Naive thymus-derived CD4-positive, alpha-beta T cell (primary cell): ENCODE measurements at regions of chr6 and their contacts with region 1.

Region 1: GRCh38 chr6:11093589-11094410 is at the start of gene SMIM13:
- DNase-seq: peak; percentile 85 to 94 (median 93)
- ATAC-seq: peak; percentile 96
- H3K4me3 ChIP-seq: peak within 1 kb of the TSS; percentile 97
- H3K4me3 Mint-ChIP-seq: peak within 1 kb of the TSS; percentile 83 to 98 (median 97)
- H3K27ac ChIP-seq: peak within 1 kb of the TSS; percentile 88
- H3K27ac Mint-ChIP-seq: peak within 1 kb of the TSS; percentile 89 to 98 (median 97)
- H3K4me1 ChIP-seq: peaks cover 11 to 14% of the 10 kb centered on the region in 2 donors
- H3K4me1 Mint-ChIP-seq: peaks cover 21 to 43% (median 27%) of the 10 kb centered on the region in 7 donors
- H3K27me3 ChIP-seq: no peaks in the 10 kb centered on the region
- H3K27me3 Mint-ChIP-seq: no peaks in the 10 kb centered on the region
- total RNA-seq, gene SMIM13: 4.0 to 9.9 (median 4.4) TPM

Region 2: DNA sequence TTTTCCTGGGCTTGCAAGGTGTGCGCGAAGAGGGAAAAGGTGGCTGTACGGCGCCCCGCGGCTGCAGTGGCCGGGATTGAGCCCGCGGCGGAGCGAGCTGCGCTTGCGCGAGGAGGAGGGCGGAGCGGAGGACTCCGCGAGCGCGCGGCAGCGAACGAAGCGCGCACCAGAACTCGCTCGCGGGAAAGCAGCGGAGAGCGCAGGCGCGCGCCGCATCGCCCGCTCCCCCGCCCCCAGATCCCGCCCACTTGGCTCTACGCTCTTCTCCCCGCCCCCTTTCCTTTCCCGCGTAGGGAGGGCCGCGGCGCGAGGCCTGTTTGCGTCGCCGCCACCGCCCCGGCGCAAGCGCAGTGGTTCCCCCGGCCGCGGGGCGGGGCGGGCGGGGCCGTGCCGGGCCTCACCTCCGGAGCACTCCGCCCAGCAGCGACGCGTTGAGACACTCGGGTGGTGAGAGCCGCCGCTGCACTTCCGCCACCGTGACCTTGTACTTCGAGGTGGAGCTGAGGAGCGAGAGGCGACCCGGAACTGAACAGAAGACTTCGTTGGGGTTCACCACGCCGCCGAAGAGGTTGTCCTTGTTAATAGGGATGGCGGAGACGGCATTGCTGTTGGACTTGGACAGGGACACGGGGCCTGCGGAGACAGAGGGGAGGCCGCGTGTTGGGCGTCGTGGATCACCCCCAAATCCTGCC is 689.5 kb before region 1 on chr6:
- CTCF ChIA-PET with region 1: no interaction called
- POLR2A ChIA-PET with region 1: no interaction called
- intact Hi-C with region 1: loop called in 1 of 2 experiments (anchors 2 kb)
- DNase-seq: peak; percentile 77 to 90 (median 83)
- ATAC-seq: peak; percentile 93
- H3K4me3 ChIP-seq: peak overlapping the region; percentile 77
- H3K4me3 Mint-ChIP-seq: peak overlapping the region; percentile 79 to 91 (median 84)
- H3K27ac ChIP-seq: peak overlapping the region; percentile 9
- H3K27ac Mint-ChIP-seq: peak overlapping the region in 8 of 9 donors; percentile 41 to 90 (median 72)
- H3K4me1 ChIP-seq: peaks cover 10 to 12% of the 10 kb centered on the region in 2 donors
- H3K4me1 Mint-ChIP-seq: peaks cover 6 to 20% (median 14%) of the 10 kb centered on the region in 7 donors
- H3K27me3 ChIP-seq: peaks cover 0 to 9% of the 10 kb centered on the region in 2 donors
- H3K27me3 Mint-ChIP-seq: peaks cover 48 to 90% (median 66%) of the 10 kb centered on the region in 5 donors

Region 3: GRCh38 chr6:10722820-10723566 is 370.8 kb before region 1 on chr6 and contains the start of gene TMEM14C:
- CTCF ChIA-PET with region 1: no interaction called
- POLR2A ChIA-PET with region 1: no interaction called
- intact Hi-C with region 1: loop called (anchors 1 kb)
- DNase-seq: peak; percentile 48 to 93 (median 61)
- ATAC-seq: peak; percentile 86
- H3K4me3 ChIP-seq: peak within 1 kb of the TSS; percentile 82
- H3K4me3 Mint-ChIP-seq: peak within 1 kb of the TSS; percentile 91 to 98 (median 96)
- H3K27ac ChIP-seq: peak within 1 kb of the TSS; percentile 76
- H3K27ac Mint-ChIP-seq: peak within 1 kb of the TSS; percentile 89 to 97 (median 94)
- H3K4me1 ChIP-seq: peaks cover 14 to 15% of the 10 kb centered on the region in 2 donors
- H3K4me1 Mint-ChIP-seq: peaks cover 27 to 62% (median 53%) of the 10 kb centered on the region in 7 donors
- H3K27me3 ChIP-seq: no peaks in the 10 kb centered on the region
- H3K27me3 Mint-ChIP-seq: no peaks in the 10 kb centered on the region
- total RNA-seq, gene TMEM14C: 20.2 to 64.3 (median 25.0) TPM

Region 4: GRCh38 chr6:11064836-11065235 is 29.0 kb before region 1 on chr6:
- CTCF ChIA-PET with region 1: no interaction called
- POLR2A ChIA-PET with region 1: no interaction called
- intact Hi-C with region 1: loop called in 1 of 2 experiments (anchors 1 kb)
- DNase-seq: no peak
- ATAC-seq: no peak
- H3K4me3 ChIP-seq: no peak overlapping the region
- H3K4me3 Mint-ChIP-seq: no peak overlapping the region
- H3K27ac ChIP-seq: no peak overlapping the region
- H3K27ac Mint-ChIP-seq: no peak overlapping the region
- H3K4me1 ChIP-seq: no peaks in the 10 kb centered on the region
- H3K4me1 Mint-ChIP-seq: no peaks in the 10 kb centered on the region
- H3K27me3 ChIP-seq: no peaks in the 10 kb centered on the region
- H3K27me3 Mint-ChIP-seq: peaks cover 0 to 19% (median 7%) of the 10 kb centered on the region in 5 donors

Region 5: GRCh38 chr6:11381801-11382513 is 288.2 kb after region 1 on chr6:
- CTCF ChIA-PET with region 1: interaction called, 7 read pairs
- POLR2A ChIA-PET with region 1: no interaction called
- intact Hi-C with region 1: loop called (anchors 1 to 5 kb)
- DNase-seq: peak; percentile 43 to 88 (median 82)
- ATAC-seq: peak; percentile 95
- H3K4me3 ChIP-seq: peak overlapping the region; percentile 70
- H3K4me3 Mint-ChIP-seq: peak overlapping the region; percentile 76 to 96 (median 91)
- H3K27ac ChIP-seq: peak overlapping the region; percentile 79
- H3K27ac Mint-ChIP-seq: peak overlapping the region; percentile 79 to 94 (median 91)
- H3K4me1 ChIP-seq: peaks cover 23 to 28% of the 10 kb centered on the region in 2 donors
- H3K4me1 Mint-ChIP-seq: peaks cover 42 to 85% (median 66%) of the 10 kb centered on the region in 7 donors
- H3K27me3 ChIP-seq: no peaks in the 10 kb centered on the region
- H3K27me3 Mint-ChIP-seq: no peaks in the 10 kb centered on the region

Region 6: GRCh38 chr6:11711003-11711983 is 617.5 kb after region 1 on chr6:
- CTCF ChIA-PET with region 1: no interaction called
- POLR2A ChIA-PET with region 1: no interaction called
- intact Hi-C with region 1: loop called in 1 of 2 experiments (anchors 10 kb)
- DNase-seq: peak in 8 of 9 donors; percentile 22 to 79 (median 38)
- ATAC-seq: peak; percentile 28
- H3K4me3 ChIP-seq: peak overlapping the region; percentile 13
- H3K4me3 Mint-ChIP-seq: peak overlapping the region; percentile 71 to 86 (median 75)
- H3K27ac ChIP-seq: peak overlapping the region; percentile 67
- H3K27ac Mint-ChIP-seq: peak overlapping the region; percentile 90 to 100 (median 97)
- H3K4me1 ChIP-seq: peaks cover 16 to 84% of the 10 kb centered on the region in 2 donors
- H3K4me1 Mint-ChIP-seq: peaks cover 55 to 92% (median 89%) of the 10 kb centered on the region in 7 donors
- H3K27me3 ChIP-seq: no peaks in the 10 kb centered on the region
- H3K27me3 Mint-ChIP-seq: no peaks in the 10 kb centered on the region